Activated CD4-positive, alpha-beta T cell treated with anti-CD3 and anti-CD28 coated beads, Interleukin-2, amount 10 ng/mL, durations not matched to agents 24 days and 14 days (primary cell): ENCODE measurements at regions of chr16 and their contacts with region 1.

Region 1: DNA sequence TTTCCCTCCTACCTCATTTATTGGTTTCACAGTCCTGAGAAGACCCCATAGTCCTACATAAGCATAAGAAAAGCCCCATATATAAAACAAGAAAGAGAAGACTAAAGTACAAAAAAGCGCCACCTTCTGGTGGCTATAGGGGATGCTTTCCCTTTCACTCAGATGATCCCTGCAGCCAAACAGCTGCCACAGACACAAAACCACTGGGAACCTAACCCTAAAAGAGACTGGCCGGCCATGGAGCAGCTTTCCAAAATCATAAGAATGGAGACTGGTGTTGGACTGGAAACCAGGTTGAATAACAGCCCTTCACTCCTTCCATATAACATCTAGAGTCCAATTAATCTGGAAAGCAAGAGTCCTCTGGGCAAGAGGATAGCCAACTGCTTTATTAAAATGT is 11.4 kb downstream of the DYNC1LI2 start:
- DNase-seq: peak; percentile 79
- H3K4me3 Mint-ChIP-seq: no peak overlapping the region
- H3K27ac Mint-ChIP-seq: no peak overlapping the region
- H3K4me1 Mint-ChIP-seq: peaks cover 15% of the 10 kb centered on the region
- H3K27me3 Mint-ChIP-seq: no peaks in the 10 kb centered on the region

Region 2: DNA sequence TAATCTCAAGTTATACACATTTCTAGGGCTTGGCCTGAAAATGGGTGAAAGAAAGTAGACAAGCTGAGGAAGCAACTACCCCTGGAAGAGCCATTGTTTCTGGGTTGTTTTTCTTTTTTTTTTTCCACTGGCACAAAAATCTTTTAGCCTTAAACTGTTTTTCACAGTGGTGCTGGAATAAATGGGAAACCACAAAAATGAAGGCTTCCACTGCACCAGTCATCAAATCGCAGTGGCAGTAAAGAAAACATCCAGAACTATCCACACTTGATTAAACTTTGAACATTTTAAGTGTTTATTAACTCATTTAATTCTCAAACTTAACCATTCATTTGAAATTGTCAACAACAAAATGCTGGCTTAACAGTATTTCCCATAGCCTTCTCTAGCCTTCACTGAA is 57.7 kb before region 1 on chr16:
- intact Hi-C with region 1: no loop called
- DNase-seq: no peak
- H3K4me3 Mint-ChIP-seq: no peak overlapping the region
- H3K27ac Mint-ChIP-seq: no peak overlapping the region
- H3K4me1 Mint-ChIP-seq: no peaks in the 10 kb centered on the region
- H3K27me3 Mint-ChIP-seq: no peaks in the 10 kb centered on the region

Region 3: DNA sequence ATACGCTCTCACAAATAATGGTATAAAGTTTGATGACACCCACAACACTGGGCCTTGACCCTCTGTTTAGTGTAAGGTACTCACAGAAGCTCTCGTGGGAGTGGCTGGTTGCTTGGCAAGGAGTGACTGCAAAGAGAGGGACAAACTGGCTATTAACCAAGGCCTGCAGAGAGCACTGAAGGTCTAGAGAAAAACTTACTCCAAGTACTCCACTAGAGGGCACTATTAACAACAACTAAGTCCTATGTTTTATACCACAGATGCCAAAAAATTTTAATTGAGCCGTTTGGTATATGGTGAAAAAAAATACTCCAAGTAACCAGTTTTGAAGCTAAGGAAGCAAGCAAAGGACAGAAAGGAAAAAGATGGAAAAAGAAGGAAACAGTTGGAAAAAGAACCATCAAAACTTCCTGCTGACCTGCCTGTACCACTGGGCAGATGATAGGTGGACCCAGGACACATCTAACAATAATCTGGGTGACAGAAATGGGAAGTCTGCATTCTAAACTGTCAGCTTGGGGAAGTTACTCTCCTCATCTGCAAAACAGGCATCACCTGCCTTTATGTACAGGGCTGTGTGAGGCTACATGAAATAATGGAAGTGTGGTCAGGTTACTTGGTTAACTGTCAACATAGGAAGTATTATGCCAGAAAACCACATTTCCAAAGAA is 11.8 kb before region 1 on chr16:
- intact Hi-C with region 1: loop called (anchors 1 kb)
- DNase-seq: peak; percentile 68
- H3K4me3 Mint-ChIP-seq: no peak overlapping the region
- H3K27ac Mint-ChIP-seq: peak overlapping the region; percentile 72
- H3K4me1 Mint-ChIP-seq: peaks cover 7% of the 10 kb centered on the region
- H3K27me3 Mint-ChIP-seq: no peaks in the 10 kb centered on the region